Right ventricle myocardium inferior (tissue), 1 donor: ENCODE measurements at regions of chr9 and their contacts with region 1.

Region 1: DNA sequence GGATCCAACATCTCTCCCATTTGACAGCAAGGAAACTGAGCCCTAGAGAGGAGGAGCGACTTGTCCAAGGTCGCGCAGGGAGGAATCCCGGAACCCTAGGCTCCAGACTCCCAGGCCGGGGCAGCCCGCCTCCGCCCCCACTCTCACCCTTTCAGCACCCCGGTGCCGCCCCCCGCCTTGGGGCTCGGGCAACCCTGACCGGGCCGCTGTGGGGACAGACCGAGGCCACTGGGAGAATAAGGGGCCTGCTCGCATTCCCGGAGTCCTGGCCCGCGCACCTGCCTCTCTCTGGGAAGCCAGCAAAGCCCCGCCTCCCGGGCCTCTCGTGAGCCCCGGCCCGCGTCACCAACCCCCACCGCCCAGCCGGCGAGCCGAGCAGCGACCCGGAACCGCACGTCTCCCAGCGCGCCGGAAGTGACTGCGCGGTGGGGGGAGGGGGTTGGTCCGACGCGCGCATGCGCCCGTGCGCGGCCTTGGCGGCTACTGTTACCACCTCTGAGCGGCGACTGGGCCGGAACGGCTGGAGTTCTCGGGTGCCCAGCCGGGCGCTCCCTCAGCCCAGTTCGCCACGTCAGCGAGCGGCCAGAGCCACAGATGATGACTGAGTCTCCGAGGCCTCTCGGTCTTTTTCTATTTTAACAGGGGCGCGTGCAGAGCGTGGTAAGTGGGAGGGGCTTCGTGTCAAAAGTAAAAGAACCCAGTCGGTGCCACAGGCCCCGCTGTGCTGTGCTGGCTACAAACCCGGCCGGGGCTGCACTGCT is at the start of gene GOLGA1:
- DNase-seq: peak; percentile 97
- ATAC-seq: peak; percentile 99
- total RNA-seq, gene GOLGA1: 16.4 TPM

Region 2: GRCh38 chr9:123049589-123050222 is 1891.2 kb before region 1 on chr9:
- intact Hi-C with region 1: no loop called
- DNase-seq: no peak
- ATAC-seq: peak; percentile 48

Region 3: GRCh38 chr9:124869986-124870560 is 70.8 kb before region 1 on chr9:
- intact Hi-C with region 1: loop called (anchors 5 kb)
- DNase-seq: no peak
- ATAC-seq: no peak

Region 4: GRCh38 chr9:125143375-125144090 is 202.7 kb after region 1 on chr9 and contains the start of gene SCAI:
- intact Hi-C with region 1: loop called (anchors 1 kb)
- DNase-seq: peak; percentile 99
- ATAC-seq: peak; percentile 100
- total RNA-seq, gene SCAI: 3.4 TPM

Region 5: GRCh38 chr9:125200210-125201047 is 259.6 kb after region 1 on chr9 and contains the start of gene RABEPK:
- intact Hi-C with region 1: loop called (anchors 5 kb)
- DNase-seq: peak; percentile 95
- ATAC-seq: peak; percentile 100
- total RNA-seq, gene RABEPK: 8.3 TPM

Region 6: DNA sequence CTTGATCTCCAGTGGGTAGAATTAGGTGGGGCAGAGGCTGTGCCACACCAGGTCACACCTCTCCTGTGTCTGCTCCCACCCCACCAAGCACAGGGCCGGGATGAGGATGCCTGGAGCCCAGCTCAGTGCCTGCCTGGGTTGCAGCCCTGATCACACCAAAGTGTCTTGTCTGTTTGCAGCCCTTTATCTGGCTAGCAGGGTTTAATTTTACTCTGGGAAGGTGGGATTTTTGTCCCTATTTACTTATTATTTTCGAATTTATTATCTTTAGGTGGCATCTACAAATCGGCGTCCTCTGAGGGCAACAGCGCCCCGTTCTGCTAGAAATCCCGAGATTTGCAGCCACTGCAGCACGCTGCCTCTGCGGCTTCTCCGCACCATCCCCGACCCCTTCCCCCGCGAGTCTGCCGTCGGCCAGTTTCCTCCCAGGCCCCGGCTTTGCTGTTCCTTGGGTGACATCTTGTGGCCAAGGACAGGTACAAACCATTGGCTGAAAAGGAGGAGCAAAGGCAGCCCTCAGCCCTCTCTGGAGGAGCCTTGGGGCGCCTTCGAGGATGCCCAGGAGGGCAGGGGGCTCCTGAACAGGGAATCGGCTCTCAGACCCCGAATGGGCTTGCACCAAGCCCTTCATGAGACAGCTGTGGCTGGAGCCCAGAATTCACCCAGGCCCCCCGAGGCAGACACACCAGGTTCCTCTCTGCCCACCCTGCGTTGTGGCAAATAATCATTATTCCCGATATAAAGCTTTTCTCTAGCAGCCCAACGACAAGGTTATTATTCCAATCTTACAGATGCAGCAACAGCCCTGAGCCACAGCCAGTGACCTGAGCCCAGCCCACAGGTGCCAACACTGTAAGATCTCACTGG is 433.8 kb after region 1 on chr9:
- intact Hi-C with region 1: loop called (anchors 10 kb)
- DNase-seq: no peak
- ATAC-seq: peak; percentile 74